A673 (cell line): ENCODE measurements at regions of chr11 and their contacts with region 1.

Region 1: GRCh38 chr11:86818466-86819192 is 18.3 kb downstream of the PRSS23 start:
- DNase-seq: peak; percentile 89
- H3K4me3 ChIP-seq: no peak overlapping the region
- H3K27ac ChIP-seq: no peak overlapping the region
- H3K4me1 ChIP-seq: peaks cover 26% of the 10 kb centered on the region
- H3K27me3 ChIP-seq: no peaks in the 10 kb centered on the region
- CTCF ChIP-seq: peak; percentile 86

Region 2: GRCh38 chr11:85854557-85855340 is 963.9 kb before region 1 on chr11:
- CTCF ChIA-PET with region 1: interaction called, 3 read pairs
- POLR2A ChIA-PET with region 1: no interaction called
- intact Hi-C with region 1: loop called (anchors 2 kb)
- DNase-seq: peak; percentile 95
- H3K4me3 ChIP-seq: peak overlapping the region; percentile 41
- H3K27ac ChIP-seq: peak overlapping the region; percentile 70
- H3K4me1 ChIP-seq: peaks cover 13% of the 10 kb centered on the region
- H3K27me3 ChIP-seq: no peaks in the 10 kb centered on the region
- CTCF ChIP-seq: peak; percentile 94

Region 3: GRCh38 chr11:85947431-85948272 is 871.0 kb before region 1 on chr11:
- CTCF ChIA-PET with region 1: no interaction called
- POLR2A ChIA-PET with region 1: no interaction called
- intact Hi-C with region 1: no loop called
- DNase-seq: no peak
- H3K4me3 ChIP-seq: no peak overlapping the region
- H3K27ac ChIP-seq: no peak overlapping the region
- H3K4me1 ChIP-seq: no peaks in the 10 kb centered on the region
- H3K27me3 ChIP-seq: no peaks in the 10 kb centered on the region
- CTCF ChIP-seq: no peak

Region 4: DNA sequence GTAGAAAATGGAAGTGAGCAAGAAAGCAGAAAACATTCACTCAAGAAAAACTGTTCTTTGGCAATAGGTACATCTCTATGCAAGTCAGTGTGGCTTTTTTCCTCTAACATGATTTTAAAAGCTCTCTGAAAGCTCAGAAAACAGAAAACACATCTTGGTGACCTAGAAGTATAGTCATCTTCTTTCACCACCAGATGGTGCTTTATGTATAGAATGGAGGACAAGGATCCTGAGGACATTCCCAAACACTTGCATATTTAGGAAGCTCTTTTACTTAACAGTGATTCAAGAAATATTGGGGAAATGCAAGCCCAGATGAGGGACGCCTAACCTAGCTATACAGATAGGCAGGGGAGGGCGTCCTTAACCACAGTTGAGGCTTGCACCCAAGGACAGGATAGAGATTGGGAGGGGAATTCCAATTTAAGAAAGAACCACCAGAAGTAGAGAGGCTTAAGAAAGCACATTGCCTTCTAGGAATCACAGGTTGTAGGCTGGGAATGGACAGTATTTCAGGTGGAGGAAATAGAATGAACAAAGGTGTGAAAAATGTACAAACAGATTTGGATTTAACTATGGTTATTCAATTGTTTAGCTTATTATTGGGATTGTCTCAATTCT is 457.7 kb before region 1 on chr11:
- CTCF ChIA-PET with region 1: no interaction called
- POLR2A ChIA-PET with region 1: no interaction called
- intact Hi-C with region 1: loop called (anchors 5 kb)
- DNase-seq: peak; percentile 45
- H3K4me3 ChIP-seq: no peak overlapping the region
- H3K27ac ChIP-seq: no peak overlapping the region
- H3K4me1 ChIP-seq: no peaks in the 10 kb centered on the region
- H3K27me3 ChIP-seq: no peaks in the 10 kb centered on the region
- CTCF ChIP-seq: peak; percentile 56

Region 5: GRCh38 chr11:86608251-86608799 is 210.3 kb before region 1 on chr11:
- CTCF ChIA-PET with region 1: no interaction called
- POLR2A ChIA-PET with region 1: no interaction called
- intact Hi-C with region 1: loop called (anchors 1 kb)
- DNase-seq: peak; percentile 82
- H3K4me3 ChIP-seq: no peak overlapping the region
- H3K27ac ChIP-seq: no peak overlapping the region
- H3K4me1 ChIP-seq: peaks cover 5% of the 10 kb centered on the region
- H3K27me3 ChIP-seq: no peaks in the 10 kb centered on the region
- CTCF ChIP-seq: peak; percentile 100

Region 6: DNA sequence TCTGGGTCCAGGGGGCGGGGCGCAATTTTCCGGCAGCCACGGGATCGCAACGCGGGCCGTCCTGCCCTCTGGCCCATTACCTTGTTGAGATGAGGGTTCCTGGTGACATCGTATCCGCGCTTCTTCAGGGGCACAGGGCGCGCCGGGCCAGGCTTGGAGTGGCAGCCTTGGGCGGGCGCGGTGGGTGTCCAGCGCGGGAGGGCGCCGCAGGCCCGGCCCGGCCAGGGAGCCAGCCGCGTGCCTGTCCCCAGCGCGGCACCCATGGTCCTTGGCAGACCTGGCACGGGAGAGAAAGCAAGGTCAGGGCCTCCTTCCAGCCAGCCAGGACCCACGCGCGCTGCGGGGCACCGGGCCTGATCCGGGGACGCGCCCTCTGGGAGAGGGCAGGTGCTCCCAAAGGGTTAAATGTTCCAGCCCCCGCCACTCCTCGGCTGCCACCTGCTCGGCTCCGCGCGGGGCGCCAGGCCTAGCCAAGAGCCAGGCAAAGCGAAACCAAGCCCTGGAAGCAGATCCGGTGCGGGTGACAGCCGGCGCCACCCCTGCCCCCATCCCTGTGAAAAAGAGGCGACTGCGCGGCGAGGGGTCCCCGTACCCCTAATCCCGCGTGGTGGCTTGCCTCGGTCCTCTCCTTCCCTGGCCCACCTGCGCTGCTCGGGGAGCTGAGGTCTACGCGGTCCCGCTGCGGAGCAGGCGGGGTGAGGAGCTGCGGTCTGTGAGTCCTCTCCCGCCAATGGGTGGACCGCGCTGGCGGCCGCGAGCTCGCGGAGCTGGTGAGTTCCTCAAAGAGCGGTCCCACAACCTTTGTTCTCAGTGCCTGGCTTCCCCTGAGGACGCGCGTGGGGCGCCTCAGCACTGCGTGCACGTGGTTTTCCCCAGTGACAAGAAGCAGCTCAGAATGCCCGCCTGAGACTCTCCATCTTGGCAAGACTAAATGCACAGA is 146.7 kb before region 1 on chr11 and contains the start of gene ME3:
- CTCF ChIA-PET with region 1: no interaction called
- POLR2A ChIA-PET with region 1: no interaction called
- intact Hi-C with region 1: loop called (anchors 5 kb)
- DNase-seq: peak; percentile 66
- H3K4me3 ChIP-seq: peak within 1 kb of the TSS; percentile 55
- H3K27ac ChIP-seq: peak within 1 kb of the TSS; percentile 53
- H3K4me1 ChIP-seq: peaks cover 23% of the 10 kb centered on the region
- H3K27me3 ChIP-seq: no peaks in the 10 kb centered on the region
- CTCF ChIP-seq: no peak
- total RNA-seq, gene ME3: 6.9 and 7.6 TPM in 2 replicates